ENCODE measurements at regions of chrX and their contacts with region 1.

Region 1: DNA sequence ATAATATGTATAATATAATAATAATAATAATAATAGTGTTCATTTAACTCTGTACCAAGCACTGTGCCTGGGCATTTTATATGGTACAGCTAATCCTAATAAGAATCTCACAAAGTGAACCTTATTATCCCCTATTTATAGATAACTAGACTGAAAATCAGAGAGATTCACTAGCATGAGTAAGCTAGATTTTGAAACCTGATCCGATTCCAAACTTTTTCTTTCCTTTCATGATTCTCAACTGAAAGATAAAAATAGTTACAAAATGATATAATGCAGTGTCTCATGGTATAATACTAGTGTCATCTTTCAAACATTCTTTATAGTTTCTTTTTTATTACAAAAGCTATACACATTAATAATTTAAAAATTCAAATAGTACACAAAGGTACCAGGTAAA is 55.9 kb upstream of the RNF128 start:
- DNase-seq: no peak
- H3K4me3 Mint-ChIP-seq: no peak overlapping the region
- H3K27ac Mint-ChIP-seq: no peak overlapping the region
- H3K4me1 Mint-ChIP-seq: peaks cover 7% of the 10 kb centered on the region
- H3K27me3 Mint-ChIP-seq: peaks cover 46% of the 10 kb centered on the region
- CTCF ChIP-seq: no peak

Region 2: DNA sequence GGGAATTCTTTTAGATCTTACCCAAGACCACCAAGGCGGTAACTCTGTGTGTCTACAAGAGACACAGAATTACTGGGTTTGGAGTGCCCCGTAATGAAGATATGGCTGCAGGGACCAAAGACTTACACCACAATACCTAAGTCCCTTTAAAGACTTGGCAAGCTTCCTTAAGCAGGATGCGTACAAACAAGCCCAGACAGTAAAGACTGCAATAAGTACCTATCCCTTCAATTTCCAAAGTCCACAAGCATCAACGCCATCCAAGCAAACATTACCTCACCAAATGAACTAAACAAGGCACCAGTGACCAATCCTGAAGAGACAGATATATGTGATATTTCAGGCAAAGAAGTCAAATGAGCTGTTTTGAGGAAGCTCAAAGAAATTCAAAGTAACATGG is 13.6 kb after region 1 on chrX:
- CTCF ChIA-PET with region 1: interaction called, 7 read pairs
- POLR2A ChIA-PET with region 1: interaction called, 14 read pairs
- intact Hi-C with region 1: no loop called
- DNase-seq: peak; percentile 33
- H3K4me3 Mint-ChIP-seq: no peak overlapping the region
- H3K27ac Mint-ChIP-seq: no peak overlapping the region
- H3K4me1 Mint-ChIP-seq: no peaks in the 10 kb centered on the region
- H3K27me3 Mint-ChIP-seq: peaks cover 69% of the 10 kb centered on the region
- CTCF ChIP-seq: no peak

Region 3: DNA sequence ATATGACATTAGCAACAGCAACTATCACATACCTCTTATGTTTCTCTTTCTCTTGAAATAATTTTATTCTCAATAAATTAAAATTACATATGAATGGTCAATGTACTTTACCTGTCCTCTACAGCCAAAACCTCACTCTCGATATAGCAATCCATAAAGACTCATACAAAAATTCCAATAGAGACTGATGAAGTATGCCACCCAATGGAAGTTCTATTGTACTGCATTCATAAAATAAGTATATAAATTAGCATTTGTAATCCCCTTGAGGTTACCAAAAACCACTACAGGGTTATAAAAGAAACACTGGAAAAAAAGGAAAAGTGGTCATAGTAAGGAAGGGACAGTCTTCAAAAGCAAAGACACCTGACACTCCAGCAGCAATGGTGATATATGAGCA is 282.4 kb after region 1 on chrX:
- CTCF ChIA-PET with region 1: no interaction called
- POLR2A ChIA-PET with region 1: no interaction called
- intact Hi-C with region 1: no loop called
- DNase-seq: peak; percentile 33
- H3K4me3 Mint-ChIP-seq: no peak overlapping the region
- H3K27ac Mint-ChIP-seq: no peak overlapping the region
- H3K4me1 Mint-ChIP-seq: no peaks in the 10 kb centered on the region
- H3K27me3 Mint-ChIP-seq: peaks cover 61% of the 10 kb centered on the region
- CTCF ChIP-seq: peak; percentile 54

Measured in MCF 10A (cell line).